SK-N-SH (cell line): ENCODE measurements at regions of chr11 and their contacts with region 1.

Region 1: DNA sequence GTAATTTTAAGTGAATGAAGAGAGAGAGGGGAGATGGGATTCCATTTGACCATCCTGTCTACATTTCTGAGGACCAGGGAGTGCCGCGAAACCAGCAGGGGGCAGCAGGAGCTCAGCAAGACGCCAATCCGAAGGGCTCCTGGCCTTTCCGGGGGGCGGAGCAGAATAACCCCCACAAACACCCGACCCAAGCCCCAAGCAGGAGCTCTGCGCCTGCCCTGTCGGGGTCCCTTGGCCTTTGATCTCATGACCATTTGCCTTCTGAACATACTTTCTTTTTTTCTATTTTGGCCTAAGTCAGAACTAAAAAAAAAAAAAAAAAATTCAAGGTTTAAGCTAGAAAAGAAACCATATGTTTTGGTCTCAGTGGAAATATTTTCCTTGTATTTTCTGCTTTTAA is 21.9 kb upstream of the SCN2B start:
- DNase-seq: peak; percentile 77
- H3K4me3 ChIP-seq: peak overlapping the region in 1 of 2 experiments; percentile 53; a peak in 1 of 4 replicates
- H3K27ac ChIP-seq: no peak overlapping the region
- H3K4me1 ChIP-seq: peaks cover 0 to 7% of the 10 kb centered on the region in 2 experiments; a peak in 1 of 4 replicates
- H3K27me3 ChIP-seq: peaks cover 39% of the 10 kb centered on the region; the same call in 1 of the 2 replicates
- CTCF ChIP-seq: peak; percentile 92
- EP300 ChIP-seq: no peak
- RAD21 ChIP-seq: peak; percentile 83

Region 2: GRCh38 chr11:117817368-117818040 is 380.9 kb before region 1 on chr11:
- CTCF ChIA-PET with region 1: no interaction called
- POLR2A ChIA-PET with region 1: no interaction called
- DNase-seq: peak; percentile 83
- H3K4me3 ChIP-seq: peak overlapping the region in 1 of 2 experiments; percentile 33; a peak in 1 of 4 replicates
- H3K27ac ChIP-seq: no peak overlapping the region
- H3K4me1 ChIP-seq: peaks cover 8 to 28% of the 10 kb centered on the region in 2 experiments; a peak in 2 of 4 replicates
- H3K27me3 ChIP-seq: no peaks in the 10 kb centered on the region
- CTCF ChIP-seq: peak; percentile 98
- EP300 ChIP-seq: no peak
- RAD21 ChIP-seq: peak; percentile 92

Region 3: DNA sequence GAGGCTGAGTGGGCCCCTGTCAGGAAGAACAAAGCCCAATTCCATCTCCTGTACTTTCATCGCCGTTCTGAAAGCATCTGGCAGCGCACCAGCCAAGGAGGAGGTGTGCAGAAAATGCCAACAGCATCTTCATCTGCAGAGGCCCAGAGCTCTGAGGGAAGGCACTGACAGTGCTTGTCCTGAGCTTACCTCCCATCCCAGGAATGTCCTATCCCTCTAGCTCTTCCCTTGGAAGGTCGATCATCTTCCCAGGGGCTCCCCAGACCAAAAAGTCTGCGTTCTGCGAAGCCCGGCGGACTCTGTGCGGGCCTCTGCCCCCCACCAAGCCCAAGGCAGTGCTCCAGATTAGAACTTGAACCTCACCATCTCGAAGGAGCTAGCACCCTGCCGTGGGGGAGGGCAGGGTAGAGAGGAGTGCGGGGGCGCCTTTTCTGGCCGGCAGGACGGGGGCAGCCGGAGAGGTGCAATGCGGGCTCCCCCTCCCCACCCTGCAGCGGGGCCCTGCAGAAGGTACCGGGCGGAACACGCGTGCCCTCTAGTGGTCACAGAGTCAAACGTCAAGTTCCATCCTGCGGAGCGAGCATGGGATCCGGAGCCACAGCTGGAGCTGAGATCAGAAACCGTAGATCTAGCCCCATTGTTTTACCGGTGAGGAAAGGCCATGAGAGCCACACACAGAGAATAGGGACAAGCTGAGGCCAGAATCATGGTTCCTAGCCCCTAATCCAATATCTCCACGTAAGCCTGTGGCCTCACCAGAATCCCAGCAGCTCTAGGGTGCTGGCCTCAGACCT is 26.9 kb before region 1 on chr11:
- CTCF ChIA-PET with region 1: interaction called, 15 read pairs
- POLR2A ChIA-PET with region 1: no interaction called
- DNase-seq: peak; percentile 93
- H3K4me3 ChIP-seq: peak overlapping the region in 1 of 2 experiments; percentile 46; a peak in 1 of 4 replicates
- H3K27ac ChIP-seq: no peak overlapping the region
- H3K4me1 ChIP-seq: peaks cover 0 to 6% of the 10 kb centered on the region in 2 experiments; a peak in 1 of 4 replicates
- H3K27me3 ChIP-seq: peaks cover 44% of the 10 kb centered on the region
- CTCF ChIP-seq: peak; percentile 89
- EP300 ChIP-seq: no peak
- RAD21 ChIP-seq: peak; percentile 86

Region 4: GRCh38 chr11:118180300-118180703 is 18.1 kb before region 1 on chr11:
- CTCF ChIA-PET with region 1: interaction called, 21 read pairs
- POLR2A ChIA-PET with region 1: no interaction called
- DNase-seq: peak; percentile 78
- H3K4me3 ChIP-seq: no peak overlapping the region
- H3K27ac ChIP-seq: no peak overlapping the region
- H3K4me1 ChIP-seq: peaks cover 0 to 14% of the 10 kb centered on the region in 2 experiments; a peak in 1 of 4 replicates
- H3K27me3 ChIP-seq: peaks cover 23% of the 10 kb centered on the region
- CTCF ChIP-seq: no peak
- EP300 ChIP-seq: 0 out of 4 replicates have a peak, but pooled peaks of 1 of the 2 experiments have one; percentile 16
- RAD21 ChIP-seq: no peak

Region 5: GRCh38 chr11:118186346-118187107 is 11.8 kb before region 1 on chr11:
- CTCF ChIA-PET with region 1: interaction called, 21 read pairs
- POLR2A ChIA-PET with region 1: no interaction called
- DNase-seq: no peak
- H3K4me3 ChIP-seq: no peak overlapping the region
- H3K27ac ChIP-seq: no peak overlapping the region
- H3K4me1 ChIP-seq: no peaks in the 10 kb centered on the region
- H3K27me3 ChIP-seq: peaks cover 27% of the 10 kb centered on the region; the same call in 1 of the 2 replicates
- CTCF ChIP-seq: no peak
- EP300 ChIP-seq: no peak
- RAD21 ChIP-seq: no peak

Region 6: DNA sequence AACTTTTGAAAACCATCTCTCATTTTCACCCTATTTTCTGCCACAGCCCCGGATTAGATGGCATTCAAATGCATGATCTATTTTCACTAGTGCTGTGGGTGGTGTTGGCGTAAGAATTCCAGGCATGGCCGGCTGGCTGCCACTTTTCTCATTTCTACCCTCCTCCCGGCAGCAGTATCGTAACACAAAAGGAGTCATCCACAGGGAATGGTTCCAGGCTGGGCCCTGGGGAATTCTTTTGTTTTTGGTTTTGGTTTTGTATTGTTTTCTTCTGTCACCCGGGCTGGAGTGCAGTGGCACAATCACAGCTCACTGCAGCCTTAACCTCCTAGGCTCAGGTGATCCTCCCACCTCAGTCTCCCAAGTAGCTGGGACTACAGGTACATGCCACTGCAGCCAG is 12.6 kb after region 1 on chr11:
- CTCF ChIA-PET with region 1: interaction called, 18 read pairs
- POLR2A ChIA-PET with region 1: interaction called, 3 read pairs
- DNase-seq: no peak
- H3K4me3 ChIP-seq: 0 out of 4 replicates have a peak overlapping the region, but pooled peaks of 1 of the 2 experiments have one; percentile 3
- H3K27ac ChIP-seq: no peak overlapping the region
- H3K4me1 ChIP-seq: no peaks in the 10 kb centered on the region
- H3K27me3 ChIP-seq: peaks cover 62% of the 10 kb centered on the region
- CTCF ChIP-seq: no peak
- EP300 ChIP-seq: no peak
- RAD21 ChIP-seq: no peak

Region 7: GRCh38 chr11:118216621-118217481 is 18.5 kb after region 1 on chr11:
- CTCF ChIA-PET with region 1: interaction called, 18 read pairs
- POLR2A ChIA-PET with region 1: no interaction called
- DNase-seq: no peak
- H3K4me3 ChIP-seq: no peak overlapping the region
- H3K27ac ChIP-seq: no peak overlapping the region
- H3K4me1 ChIP-seq: no peaks in the 10 kb centered on the region
- H3K27me3 ChIP-seq: peaks cover 72% of the 10 kb centered on the region
- CTCF ChIP-seq: no peak
- EP300 ChIP-seq: no peak
- RAD21 ChIP-seq: no peak

Region 8: DNA sequence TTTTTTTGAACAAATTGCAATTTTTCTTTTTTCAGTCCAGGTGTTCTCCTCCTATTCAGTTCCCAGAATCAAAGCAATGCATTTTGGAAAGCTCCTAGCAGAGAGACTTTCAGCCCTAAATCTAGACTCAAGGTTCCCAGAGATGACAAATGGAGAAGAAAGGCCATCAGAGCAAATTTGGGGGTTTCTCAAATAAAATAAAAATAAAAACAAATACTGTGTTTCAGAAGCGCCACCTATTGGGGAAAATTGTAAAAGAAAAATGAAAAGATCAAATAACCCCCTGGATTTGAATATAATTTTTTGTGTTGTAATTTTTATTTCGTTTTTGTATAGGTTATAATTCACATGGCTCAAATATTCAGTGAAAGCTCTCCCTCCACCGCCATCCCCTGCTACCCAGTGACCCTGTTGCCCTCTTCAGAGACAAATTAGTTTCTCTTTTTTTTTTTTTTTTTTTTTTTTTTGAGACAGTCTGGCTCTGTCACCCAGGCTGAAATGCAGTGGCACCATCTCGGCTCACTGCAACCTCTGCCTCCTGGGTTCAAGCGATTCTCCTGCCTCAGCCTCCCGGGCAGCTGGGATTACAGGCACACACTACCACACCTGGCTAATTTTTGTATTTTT is 154.8 kb after region 1 on chr11:
- CTCF ChIA-PET with region 1: interaction called, 34 read pairs
- POLR2A ChIA-PET with region 1: no interaction called
- DNase-seq: peak; percentile 20
- H3K4me3 ChIP-seq: peak overlapping the region in 1 of 2 experiments; percentile 25; a peak in 1 of 4 replicates
- H3K27ac ChIP-seq: no peak overlapping the region
- H3K4me1 ChIP-seq: no peaks in the 10 kb centered on the region; a peak in 1 of 4 replicates
- H3K27me3 ChIP-seq: peaks cover 39% of the 10 kb centered on the region; the same call in 1 of the 2 replicates
- CTCF ChIP-seq: peak; percentile 81
- EP300 ChIP-seq: no peak
- RAD21 ChIP-seq: peak; percentile 56